ENCODE measurements at regions of chr7 and their contacts with region 1.

Region 1: GRCh38 chr7:14717816-14718215 is 184.7 kb downstream of the DGKB start:
- DNase-seq: no peak
- H3K4me3 ChIP-seq: no peak overlapping the region
- H3K27ac ChIP-seq: no peak overlapping the region
- H3K4me1 ChIP-seq: no peaks in the 10 kb centered on the region
- H3K27me3 ChIP-seq: no peaks in the 10 kb centered on the region
- CTCF ChIP-seq: peak; percentile 37 to 60

Region 2: GRCh38 chr7:14924398-14924797 is 206.6 kb after region 1 on chr7:
- CTCF ChIA-PET with region 1: no interaction called
- dilution Hi-C with region 1: no loop called
- in situ Hi-C with region 1: no loop called
- intact Hi-C with region 1: loop called (anchors 5 kb)
- DNase-seq: no peak
- H3K4me3 ChIP-seq: no peak overlapping the region
- H3K27ac ChIP-seq: no peak overlapping the region
- H3K4me1 ChIP-seq: no peaks in the 10 kb centered on the region
- H3K27me3 ChIP-seq: no peaks in the 10 kb centered on the region
- CTCF ChIP-seq: no peak

Region 3: DNA sequence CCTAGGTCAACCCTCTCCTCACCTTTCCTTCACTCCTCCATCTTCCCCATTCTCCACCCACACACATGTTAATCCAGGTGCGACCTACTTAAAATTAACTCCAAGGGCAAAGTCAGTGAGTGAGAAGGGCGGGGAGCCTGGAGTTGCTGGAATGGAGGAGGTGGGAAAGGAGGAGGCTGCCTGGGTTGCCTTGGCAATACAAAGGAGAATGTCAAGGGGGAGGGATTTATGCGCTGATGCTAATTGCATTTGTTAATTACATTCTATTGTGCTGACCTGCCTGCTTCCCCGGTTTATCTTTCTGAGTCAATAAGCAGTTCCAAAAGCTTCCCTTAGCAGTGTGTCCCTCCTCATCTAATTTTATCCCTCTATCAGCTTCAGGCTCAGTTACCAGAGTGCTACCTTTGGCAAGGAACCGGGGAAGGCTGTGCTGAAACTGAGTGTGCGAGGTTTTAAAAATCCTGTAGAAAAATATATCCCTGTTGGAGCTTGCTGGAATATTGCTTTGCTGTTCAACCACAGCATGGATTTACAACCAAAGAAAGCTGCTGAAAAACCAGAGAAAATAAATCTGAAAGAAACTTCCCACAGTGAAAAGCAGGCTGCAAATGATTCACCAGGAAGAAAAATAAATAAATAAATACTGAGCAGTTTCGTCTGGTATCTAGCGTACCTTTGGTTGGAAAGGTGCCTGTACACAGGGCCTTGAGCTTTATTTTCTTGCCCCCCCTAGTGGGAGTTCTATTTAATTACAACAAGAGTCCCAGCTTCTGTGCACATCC is 297.9 kb after region 1 on chr7:
- CTCF ChIA-PET with region 1: interaction called, 25 read pairs
- dilution Hi-C with region 1: no loop called
- in situ Hi-C with region 1: loop called (anchors 10 to 25 kb)
- intact Hi-C with region 1: loop called (anchors 1 kb)
- DNase-seq: peak; percentile 80
- H3K4me3 ChIP-seq: peak overlapping the region in 2 of 3 experiments; percentile 32 to 42
- H3K27ac ChIP-seq: peak overlapping the region; percentile 63
- H3K4me1 ChIP-seq: peaks cover 20% of the 10 kb centered on the region
- H3K27me3 ChIP-seq: no peaks in the 10 kb centered on the region
- CTCF ChIP-seq: peak; percentile 52 to 72

Region 4: DNA sequence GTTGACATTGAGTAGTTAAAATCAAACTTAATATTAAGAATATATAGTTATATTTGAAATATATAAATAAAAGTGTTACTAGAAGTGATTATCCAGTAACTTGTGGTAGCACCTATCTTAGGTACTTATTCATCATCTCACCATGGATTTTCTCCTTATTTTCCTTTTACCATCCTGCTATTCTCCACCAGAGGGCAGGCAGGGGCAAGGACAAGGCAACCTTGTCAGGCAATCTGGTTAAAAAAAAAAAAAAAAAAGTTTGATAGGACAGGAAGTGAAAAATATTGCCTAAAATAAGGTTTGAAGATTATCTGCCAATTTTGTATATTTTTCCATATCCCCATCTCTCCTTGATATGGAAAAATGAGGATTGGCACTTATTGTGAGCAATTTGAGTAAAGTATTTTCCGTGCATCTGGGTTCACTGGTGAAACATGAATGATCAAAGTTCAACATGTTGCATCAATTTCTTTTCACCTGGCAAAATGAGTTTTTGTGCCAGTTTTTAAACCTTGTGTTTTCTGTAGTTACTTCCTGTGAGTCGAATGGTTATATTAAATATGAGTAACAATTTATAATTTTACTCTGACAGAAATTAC is 587.3 kb after region 1 on chr7:
- CTCF ChIA-PET with region 1: no interaction called
- dilution Hi-C with region 1: no loop called
- in situ Hi-C with region 1: no loop called
- intact Hi-C with region 1: loop called (anchors 5 kb)
- DNase-seq: peak; percentile 33
- H3K4me3 ChIP-seq: no peak overlapping the region
- H3K27ac ChIP-seq: no peak overlapping the region
- H3K4me1 ChIP-seq: no peaks in the 10 kb centered on the region
- H3K27me3 ChIP-seq: no peaks in the 10 kb centered on the region
- CTCF ChIP-seq: peak; percentile 72 to 79